ENCODE measurements at regions of chr16 and their contacts with region 1.

Region 1: DNA sequence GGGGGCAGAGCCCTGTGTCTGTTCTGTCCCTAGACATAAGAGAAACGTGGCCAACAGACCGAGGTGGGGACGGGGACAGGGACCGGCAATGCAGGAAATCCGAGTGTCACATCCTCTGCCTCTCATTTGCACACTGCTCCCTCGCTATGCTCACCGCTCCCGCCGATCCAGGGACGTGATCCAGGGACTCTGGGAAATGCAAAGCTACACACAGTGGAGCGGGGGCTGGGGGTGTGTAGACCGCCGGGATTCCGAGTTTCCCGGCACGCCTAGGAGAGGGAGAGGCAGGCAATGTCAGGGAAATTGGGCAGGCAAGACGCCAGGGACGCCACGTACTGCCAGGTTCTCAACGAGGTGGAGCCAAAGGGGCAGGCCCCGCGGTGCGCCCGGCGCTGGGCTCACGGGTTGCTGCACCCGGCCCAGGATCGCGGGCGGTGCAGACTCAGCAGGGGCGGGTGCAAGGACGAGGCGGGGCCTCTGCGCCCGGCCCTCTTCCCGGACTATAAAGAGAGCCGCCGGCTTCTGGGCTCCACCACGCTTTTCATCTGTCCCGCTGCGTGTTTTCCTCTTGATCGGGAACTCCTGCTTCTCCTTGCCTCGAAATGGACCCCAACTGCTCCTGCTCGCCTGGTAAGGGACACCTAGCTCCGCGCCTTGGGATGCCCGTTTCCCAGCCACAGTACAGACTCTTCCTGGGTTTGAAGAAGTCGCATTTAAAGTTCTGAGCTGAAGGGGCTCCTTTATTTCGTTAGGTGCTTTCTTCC is at the start of gene MT1X:
- DNase-seq: peak; percentile 94
- ATAC-seq: peak; percentile 97
- H3K4me3 Mint-ChIP-seq: peak within 1 kb of the TSS; percentile 96
- H3K27ac Mint-ChIP-seq: peak within 1 kb of the TSS; percentile 98
- H3K4me1 Mint-ChIP-seq: peaks cover 34% of the 10 kb centered on the region
- H3K27me3 Mint-ChIP-seq: no peaks in the 10 kb centered on the region
- total RNA-seq, gene MT1X: 85.3 to 86.0 TPM

Region 2: GRCh38 chr16:56608043-56608875 is 73.9 kb before region 1 on chr16 and contains the start of gene MT2A:
- CTCF ChIA-PET with region 1: interaction called, 3 read pairs
- POLR2A ChIA-PET with region 1: interaction called, 14 read pairs
- DNase-seq: peak; percentile 94
- ATAC-seq: peak; percentile 90
- H3K4me3 Mint-ChIP-seq: peak within 1 kb of the TSS; percentile 93
- H3K27ac Mint-ChIP-seq: peak within 1 kb of the TSS; percentile 87
- H3K4me1 Mint-ChIP-seq: peaks cover 43% of the 10 kb centered on the region
- H3K27me3 Mint-ChIP-seq: no peaks in the 10 kb centered on the region
- total RNA-seq, gene MT2A: 186 to 210 TPM

Region 3: GRCh38 chr16:56708525-56709442 is 26.7 kb after region 1 on chr16:
- CTCF ChIA-PET with region 1: interaction called, 7 read pairs
- POLR2A ChIA-PET with region 1: interaction called, 23 read pairs
- DNase-seq: peak; percentile 72
- ATAC-seq: peak; percentile 85
- H3K4me3 Mint-ChIP-seq: peak overlapping the region; percentile 80
- H3K27ac Mint-ChIP-seq: peak overlapping the region; percentile 93
- H3K4me1 Mint-ChIP-seq: peaks cover 41% of the 10 kb centered on the region
- H3K27me3 Mint-ChIP-seq: no peaks in the 10 kb centered on the region

Region 4: GRCh38 chr16:56743840-56744239 is 61.7 kb after region 1 on chr16:
- CTCF ChIA-PET with region 1: no interaction called
- POLR2A ChIA-PET with region 1: no interaction called
- DNase-seq: no peak
- ATAC-seq: no peak
- H3K4me3 Mint-ChIP-seq: no peak overlapping the region
- H3K27ac Mint-ChIP-seq: no peak overlapping the region
- H3K4me1 Mint-ChIP-seq: peaks cover 13% of the 10 kb centered on the region
- H3K27me3 Mint-ChIP-seq: no peaks in the 10 kb centered on the region

Region 5: GRCh38 chr16:57284208-57284951 is 602.3 kb after region 1 on chr16 and contains the start of gene PLLP:
- CTCF ChIA-PET with region 1: no interaction called
- POLR2A ChIA-PET with region 1: no interaction called
- DNase-seq: no peak
- ATAC-seq: peak; percentile 74
- H3K4me3 Mint-ChIP-seq: peak within 1 kb of the TSS; percentile 61
- H3K27ac Mint-ChIP-seq: no peak within 1 kb of the TSS
- H3K4me1 Mint-ChIP-seq: peaks cover 18% of the 10 kb centered on the region
- H3K27me3 Mint-ChIP-seq: peaks cover 36% of the 10 kb centered on the region
- total RNA-seq, gene PLLP: 0.18 to 0.37 TPM